ENCODE measurements at regions of chr2 and their contacts with region 1.

Region 1: DNA sequence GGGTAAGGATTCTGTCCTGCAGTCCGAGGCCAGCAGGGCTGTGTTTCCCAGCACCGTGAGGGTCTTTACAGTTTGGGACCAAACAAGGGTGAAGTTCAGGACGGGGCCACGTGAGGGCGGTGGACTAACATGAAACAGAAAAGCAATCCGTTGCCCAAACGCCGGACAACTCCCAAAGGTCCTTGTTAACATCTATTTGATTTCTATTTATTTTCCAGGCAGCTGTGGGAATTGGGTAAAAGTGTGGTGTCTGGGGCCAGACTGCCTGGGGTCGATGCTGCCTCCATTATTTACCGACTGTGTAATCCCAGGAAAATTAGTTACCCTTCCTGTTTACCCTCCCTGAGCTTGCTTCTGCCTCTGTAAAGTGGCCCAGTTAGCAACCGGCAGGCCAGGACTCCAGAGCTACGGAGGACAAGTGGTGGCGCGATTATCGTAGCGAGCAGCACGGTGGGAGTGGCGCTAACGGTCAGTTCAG is 66.3 kb upstream of the TCF7L1 start:
- DNase-seq: peak; percentile 65 to 95
- H3K4me3 ChIP-seq: peak overlapping the region in 3 of 4 experiments; percentile 25 to 49 (median 47); a peak in 4 of 8 replicates
- H3K27ac ChIP-seq: no peak overlapping the region
- H3K4me1 ChIP-seq: peaks cover 8 to 18% (median 10%) of the 10 kb centered on the region in 4 experiments
- H3K27me3 ChIP-seq: peaks cover 0 to 4% (median 0%) of the 10 kb centered on the region in 4 experiments; a peak in 4 of 7 replicates
- CTCF ChIP-seq: peak; percentile 86 to 91 (median 90)
- EP300 ChIP-seq: no peak
- POLR2A ChIP-seq: no peak
- RAD21 ChIP-seq: peak; percentile 92

Region 2: DNA sequence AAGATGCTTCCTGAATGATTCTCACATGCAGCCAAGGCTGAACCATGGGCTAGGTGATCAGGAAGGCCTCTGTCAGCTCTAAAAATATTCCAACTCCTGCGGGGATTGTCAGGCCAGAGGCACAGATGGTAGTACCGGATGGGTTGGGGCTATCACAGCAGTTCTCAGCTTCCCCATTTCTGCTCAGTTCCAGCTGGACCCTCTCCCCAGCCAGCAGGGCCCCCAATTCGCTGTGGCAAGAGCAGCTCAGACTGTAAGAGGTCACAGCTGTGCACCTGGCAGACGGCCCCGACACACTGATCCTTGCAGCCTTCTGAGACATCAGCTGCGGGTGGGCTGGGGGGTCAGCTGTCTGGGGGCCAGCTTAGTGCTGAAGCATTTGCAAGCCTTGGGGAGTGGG is 22.7 kb after region 1 on chr2:
- CTCF ChIA-PET with region 1: interaction called, 29 read pairs
- POLR2A ChIA-PET with region 1: interaction called, 4 read pairs
- DNase-seq: peak in 1 of 2 experiments; percentile 52
- H3K4me3 ChIP-seq: peak overlapping the region in 2 of 4 experiments; percentile 3 to 20; a peak in 2 of 8 replicates
- H3K27ac ChIP-seq: 0 out of 2 replicates have a peak overlapping the region, but pooled peaks have one; percentile 5
- H3K4me1 ChIP-seq: peaks cover 3 to 18% (median 9%) of the 10 kb centered on the region in 4 experiments
- H3K27me3 ChIP-seq: no peaks in the 10 kb centered on the region
- CTCF ChIP-seq: no peak
- EP300 ChIP-seq: no peak
- POLR2A ChIP-seq: no peak
- RAD21 ChIP-seq: no peak

Region 3: DNA sequence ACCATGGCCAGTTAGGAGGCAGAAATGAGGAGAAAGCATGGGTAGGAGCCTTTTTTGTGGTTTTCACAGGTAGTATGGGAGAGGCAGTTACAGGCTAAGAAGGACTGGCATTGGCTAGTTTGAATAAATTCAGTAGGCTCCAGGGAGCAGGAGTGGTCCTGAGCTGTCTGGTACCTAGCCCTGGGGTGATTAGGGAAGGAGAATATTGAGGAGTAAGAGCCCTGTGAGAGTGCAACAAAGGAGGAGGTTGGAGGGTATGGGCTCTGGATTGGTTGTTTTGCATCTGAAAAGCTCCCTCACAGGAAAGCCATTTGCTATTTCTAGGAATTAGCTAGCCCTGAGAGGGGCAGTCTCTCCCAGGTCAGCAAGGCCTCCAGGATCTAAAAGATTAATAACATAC is 53.0 kb after region 1 on chr2:
- CTCF ChIA-PET with region 1: interaction called, 11 read pairs
- POLR2A ChIA-PET with region 1: no interaction called
- DNase-seq: peak; percentile 54 to 61
- H3K4me3 ChIP-seq: no peak overlapping the region
- H3K27ac ChIP-seq: no peak overlapping the region
- H3K4me1 ChIP-seq: peaks cover 0 to 3% (median under 1%) of the 10 kb centered on the region in 4 experiments; a peak in 1 of 7 replicates
- H3K27me3 ChIP-seq: peaks cover 2 to 24% (median 20%) of the 10 kb centered on the region in 4 experiments
- CTCF ChIP-seq: peak in 1 of 3 experiments; percentile 9; a peak in 1 of 4 replicates
- EP300 ChIP-seq: peak in 1 of 2 experiments; percentile 54; a peak in 1 of 3 replicates
- POLR2A ChIP-seq: no peak
- RAD21 ChIP-seq: peak; percentile 17 to 28; a peak in 2 of 4 replicates

Region 4: GRCh38 chr2:85302121-85302520 is 235.2 kb after region 1 on chr2:
- CTCF ChIA-PET with region 1: interaction called, 136 read pairs
- POLR2A ChIA-PET with region 1: interaction called, 5 read pairs
- DNase-seq: no peak
- H3K4me3 ChIP-seq: no peak overlapping the region
- H3K27ac ChIP-seq: no peak overlapping the region
- H3K4me1 ChIP-seq: 0 out of 7 replicates have a peak, but pooled peaks cover 0 to 2% (median 0%) of the 10 kb centered on the region in 4 experiments
- H3K27me3 ChIP-seq: no peaks in the 10 kb centered on the region
- CTCF ChIP-seq: no peak
- EP300 ChIP-seq: no peak
- POLR2A ChIP-seq: no peak
- RAD21 ChIP-seq: no peak

Region 5: GRCh38 chr2:85318222-85319074 is 251.5 kb after region 1 on chr2:
- CTCF ChIA-PET with region 1: interaction called, 13 read pairs
- POLR2A ChIA-PET with region 1: interaction called, 3 read pairs
- DNase-seq: no peak
- H3K4me3 ChIP-seq: no peak overlapping the region
- H3K27ac ChIP-seq: no peak overlapping the region
- H3K4me1 ChIP-seq: no peaks in the 10 kb centered on the region
- H3K27me3 ChIP-seq: no peaks in the 10 kb centered on the region
- CTCF ChIP-seq: no peak
- EP300 ChIP-seq: no peak
- POLR2A ChIP-seq: no peak
- RAD21 ChIP-seq: no peak

Measured in H1 (cell line).